PC-9 (cell line): ENCODE measurements at regions of chr19 and their contacts with region 1.

Region 1: DNA sequence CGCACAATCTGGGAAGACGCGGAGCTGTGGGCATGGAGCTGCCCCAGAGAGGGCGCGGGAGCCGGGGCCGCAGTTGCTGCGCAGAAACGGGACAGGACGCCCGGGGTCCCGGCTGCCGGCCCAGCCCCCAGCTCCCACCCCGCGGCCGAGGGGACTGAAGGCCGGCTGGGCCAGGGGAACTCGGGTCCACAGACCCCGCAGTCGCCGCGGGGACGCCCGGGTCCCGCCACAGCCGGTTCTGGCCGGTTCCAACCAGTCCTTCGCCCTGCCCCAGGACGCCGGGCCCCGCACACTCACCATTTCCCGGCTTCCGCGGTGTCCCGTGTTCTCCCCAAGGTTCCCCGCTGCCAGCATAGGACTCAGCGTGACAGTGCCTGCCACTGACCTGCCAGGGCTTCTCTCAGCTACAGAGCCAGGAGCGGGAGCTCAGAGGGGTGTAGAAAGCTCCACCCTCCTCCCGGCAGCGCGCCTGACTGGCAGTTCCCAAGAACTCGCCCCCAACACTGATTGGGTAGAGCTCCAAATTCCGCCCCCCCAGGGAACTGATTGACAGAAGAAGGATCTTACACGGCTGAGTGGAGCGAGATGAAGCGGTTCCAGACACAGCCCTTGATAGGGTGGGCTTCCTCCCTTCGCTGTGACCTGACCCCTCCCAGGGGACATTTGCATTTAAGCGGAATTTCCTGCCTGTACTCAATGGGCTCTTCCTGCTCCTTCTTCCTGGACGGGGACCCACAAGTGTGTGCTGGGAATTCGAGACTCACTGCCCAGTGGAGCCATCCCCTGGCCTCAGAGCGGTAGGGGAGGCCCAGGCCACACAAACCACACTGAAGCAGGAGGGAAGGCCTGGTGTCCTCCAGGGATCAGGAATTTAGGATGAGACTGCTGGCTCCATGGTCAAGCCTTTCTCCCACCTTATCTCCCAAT is at the start of gene ZNF442:
- DNase-seq: peak; percentile 78 to 80
- H3K4me3 ChIP-seq: peak within 1 kb of the TSS; percentile 32; the same call in 1 of the 2 replicates
- H3K27ac ChIP-seq: no peak within 1 kb of the TSS
- H3K4me1 ChIP-seq: no peaks in the 10 kb centered on the region
- H3K27me3 ChIP-seq: peaks cover 27% of the 10 kb centered on the region; the same call in 1 of the 2 replicates
- CTCF ChIP-seq: no peak
- total RNA-seq, gene ZNF442: not detected in 2 replicates

Region 2: GRCh38 chr19:12272980-12273901 is 92.3 kb before region 1 on chr19:
- CTCF ChIA-PET with region 1: no interaction called
- POLR2A ChIA-PET with region 1: no interaction called
- intact Hi-C with region 1: no loop called
- DNase-seq: no peak
- H3K4me3 ChIP-seq: no peak overlapping the region
- H3K27ac ChIP-seq: no peak overlapping the region
- H3K4me1 ChIP-seq: no peaks in the 10 kb centered on the region
- H3K27me3 ChIP-seq: no peaks in the 10 kb centered on the region
- CTCF ChIP-seq: no peak

Region 3: DNA sequence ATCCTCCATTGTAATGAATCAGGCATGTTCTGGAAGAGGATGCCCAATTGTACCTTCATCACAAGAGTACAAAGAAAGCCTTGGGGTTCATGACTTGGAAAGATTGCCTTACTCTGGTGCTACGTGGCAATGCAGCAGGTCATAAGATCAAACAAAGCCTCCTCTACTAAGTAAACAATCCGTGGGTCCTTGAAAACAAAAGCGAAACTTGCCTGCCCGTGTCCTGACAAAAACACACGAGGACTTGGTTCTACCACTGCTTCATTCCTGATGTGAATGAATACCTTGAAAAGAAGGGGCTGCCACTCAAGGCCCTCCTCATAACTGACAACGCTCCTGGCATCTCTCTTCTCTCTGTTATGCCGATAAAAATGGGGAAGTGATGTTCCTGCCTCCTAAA is 50.9 kb before region 1 on chr19:
- CTCF ChIA-PET with region 1: no interaction called
- POLR2A ChIA-PET with region 1: interaction called, 27 read pairs
- intact Hi-C with region 1: no loop called
- DNase-seq: no peak
- H3K4me3 ChIP-seq: peak overlapping the region; percentile 29; the same call in 1 of the 2 replicates
- H3K27ac ChIP-seq: no peak overlapping the region
- H3K4me1 ChIP-seq: no peaks in the 10 kb centered on the region
- H3K27me3 ChIP-seq: no peaks in the 10 kb centered on the region
- CTCF ChIP-seq: no peak